ENCODE measurements at regions of chr11 and their contacts with region 1.

Region 1: GRCh38 chr11:64317957-64318693 is at the start of gene PRDX5:
- DNase-seq: peak in 9 of 10 donors; percentile 91 to 97 (median 95)
- ATAC-seq: peak; percentile 77 to 82
- H3K4me3 Mint-ChIP-seq: peak within 1 kb of the TSS; percentile 90 to 97 (median 94)
- H3K27ac Mint-ChIP-seq: peak within 1 kb of the TSS; percentile 97 to 100 (median 99)
- H3K4me1 Mint-ChIP-seq: peaks cover 22 to 45% (median 40%) of the 10 kb centered on the region in 4 donors
- H3K27me3 Mint-ChIP-seq: no peaks in the 10 kb centered on the region
- polyA plus RNA-seq, gene PRDX5: 186 to 239 (median 206) TPM

Region 2: GRCh38 chr11:64225612-64226506 is 92.3 kb before region 1 on chr11 and contains the starts of genes NUDT22 and TRPT1:
- POLR2A ChIA-PET with region 1: interaction called, 23 read pairs
- DNase-seq: peak; percentile 80 to 93 (median 85)
- ATAC-seq: peak; percentile 69 to 71
- H3K4me3 Mint-ChIP-seq: peak within 1 kb of the TSS; percentile 87 to 95 (median 90)
- H3K27ac Mint-ChIP-seq: peak within 1 kb of the TSS; percentile 83 to 97 (median 92)
- H3K4me1 Mint-ChIP-seq: peaks cover 17 to 41% (median 33%) of the 10 kb centered on the region in 4 donors
- H3K27me3 Mint-ChIP-seq: no peaks in the 10 kb centered on the region
- polyA plus RNA-seq, gene NUDT22: 43.4 to 50.4 (median 48.2) TPM
- polyA plus RNA-seq, gene TRPT1: 47.2 to 54.2 (median 51.4) TPM

Region 3: DNA sequence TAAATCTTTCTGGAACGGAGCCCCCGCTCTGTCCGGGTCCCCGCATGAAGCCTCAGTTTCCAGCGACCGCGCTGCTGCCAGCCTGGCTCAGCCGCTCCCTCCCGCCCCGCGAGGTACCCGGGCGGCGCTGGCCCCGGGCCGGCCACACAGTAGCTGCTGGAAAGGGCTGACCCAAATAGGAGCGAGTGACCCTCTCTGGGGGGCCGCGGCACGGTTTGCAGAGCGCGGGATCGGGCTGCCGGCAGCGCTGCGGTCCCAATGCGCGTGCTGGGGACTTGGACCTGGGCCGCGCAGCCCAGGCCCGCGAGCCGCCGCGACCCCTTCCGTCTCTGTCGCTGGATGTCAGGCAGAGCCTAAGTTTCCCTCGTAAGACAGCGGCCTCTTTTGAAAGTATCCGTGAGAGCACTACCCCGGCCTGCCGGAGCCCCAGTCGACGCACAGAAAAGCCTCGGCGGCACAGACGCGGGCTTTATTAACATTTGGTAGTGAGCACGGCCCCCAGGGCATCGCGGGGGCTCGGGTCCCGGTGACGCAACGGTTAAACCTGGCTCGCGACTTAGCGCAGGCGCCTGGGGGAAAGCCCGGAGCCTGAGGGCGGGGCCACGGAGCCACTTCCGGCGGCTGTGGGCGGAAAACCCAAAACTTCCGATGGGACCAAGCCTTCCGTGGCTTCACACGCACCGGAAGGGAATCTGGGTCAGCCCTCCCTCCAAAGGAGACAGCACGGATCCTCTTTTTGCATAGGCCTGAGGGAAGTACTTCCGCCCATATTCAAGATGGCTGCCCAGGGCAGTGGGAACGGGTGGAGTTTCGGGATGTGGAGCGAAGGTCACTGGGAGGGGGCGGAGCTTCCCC is 48.5 kb before region 1 on chr11:
- POLR2A ChIA-PET with region 1: interaction called, 53 read pairs
- DNase-seq: peak; percentile 93 to 98 (median 97)
- ATAC-seq: peak; percentile 76 to 77
- H3K4me3 Mint-ChIP-seq: peak overlapping the region; percentile 92 to 99 (median 96)
- H3K27ac Mint-ChIP-seq: peak overlapping the region; percentile 94 to 100 (median 98)
- H3K4me1 Mint-ChIP-seq: peaks cover 20 to 37% (median 27%) of the 10 kb centered on the region in 4 donors
- H3K27me3 Mint-ChIP-seq: no peaks in the 10 kb centered on the region

Region 4: GRCh38 chr11:64331557-64332371 is 13.6 kb after region 1 on chr11:
- POLR2A ChIA-PET with region 1: interaction called, 13 read pairs
- DNase-seq: peak in 9 of 10 donors; percentile 36 to 61 (median 58)
- ATAC-seq: peak; percentile 93 to 94
- H3K4me3 Mint-ChIP-seq: peak overlapping the region in 7 of 10 donors; percentile 0 to 77 (median 16)
- H3K27ac Mint-ChIP-seq: peak overlapping the region in 7 of 10 donors; percentile 18 to 90 (median 44)
- H3K4me1 Mint-ChIP-seq: peaks cover 4 to 19% (median 10%) of the 10 kb centered on the region in 4 donors
- H3K27me3 Mint-ChIP-seq: no peaks in the 10 kb centered on the region

Region 5: DNA sequence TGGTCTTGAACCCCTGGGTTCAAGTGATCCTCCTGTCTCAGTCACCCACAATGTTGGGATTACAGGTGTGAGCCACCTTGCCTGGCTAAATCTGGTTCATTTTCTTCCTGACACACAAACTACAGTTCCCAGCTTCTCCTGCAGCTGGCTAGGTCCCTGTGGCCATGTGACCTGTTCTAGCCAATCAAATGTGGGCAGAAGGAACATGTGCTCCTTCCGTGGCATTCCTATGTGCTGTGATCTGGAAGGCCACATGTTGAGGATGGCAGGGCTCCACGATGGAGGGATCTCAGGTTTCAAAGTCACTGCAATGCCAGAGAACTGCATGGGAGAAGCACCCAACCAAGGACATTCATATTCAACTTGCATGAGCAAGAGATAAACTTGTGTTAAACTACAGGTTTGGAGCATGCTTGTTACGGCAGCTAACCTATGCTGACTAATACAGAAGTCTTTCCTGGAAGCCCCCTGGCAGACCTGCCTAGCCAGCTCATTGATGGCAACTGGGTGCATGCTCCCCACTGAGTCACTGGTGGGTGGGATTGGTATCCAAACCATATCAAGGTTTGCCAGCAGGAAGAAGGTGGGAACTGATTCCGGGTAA is 126.8 kb after region 1 on chr11:
- POLR2A ChIA-PET with region 1: no interaction called
- DNase-seq: no peak
- ATAC-seq: no peak
- H3K4me3 Mint-ChIP-seq: no peak overlapping the region
- H3K27ac Mint-ChIP-seq: no peak overlapping the region
- H3K4me1 Mint-ChIP-seq: peaks cover 9 to 37% (median 17%) of the 10 kb centered on the region in 4 donors
- H3K27me3 Mint-ChIP-seq: peaks cover 0 to 26% (median 3%) of the 10 kb centered on the region in 5 donors

Region 6: GRCh38 chr11:64742889-64743590 is 424.9 kb after region 1 on chr11:
- POLR2A ChIA-PET with region 1: interaction called, 14 read pairs
- DNase-seq: peak; percentile 57 to 91 (median 78)
- ATAC-seq: peak; percentile 7 to 11
- H3K4me3 Mint-ChIP-seq: peak overlapping the region in 8 of 10 donors; percentile 89 to 100 (median 99)
- H3K27ac Mint-ChIP-seq: peak overlapping the region in 7 of 10 donors; percentile 90 to 99 (median 98)
- H3K4me1 Mint-ChIP-seq: peaks cover 29 to 54% (median 44%) of the 10 kb centered on the region in 4 donors
- H3K27me3 Mint-ChIP-seq: peaks cover 0 to 2% (median 0%) of the 10 kb centered on the region in 5 donors

Measured in naive thymus-derived CD8-positive, alpha-beta T cell (primary cell).